Heart left ventricle (tissue), 16 donors: ENCODE measurements at regions of chr9 and their contacts with region 1.

Region 1: GRCh38 chr9:105967798-105968197 is 273.5 kb downstream of the TMEM38B start:
- DNase-seq: no peak
- ATAC-seq: no peak
- H3K4me3 ChIP-seq: no peak overlapping the region
- H3K27ac ChIP-seq: no peak overlapping the region
- H3K4me1 ChIP-seq: peaks cover 0 to 11% (median 6%) of the 10 kb centered on the region in 12 donors
- H3K27me3 ChIP-seq: no peaks in the 10 kb centered on the region
- CTCF ChIP-seq: no peak
- POLR2A ChIP-seq: no peak

Region 2: GRCh38 chr9:105993051-105993854 is 25.5 kb after region 1 on chr9:
- intact Hi-C with region 1: loop called in 1 of 10 experiments (anchors 2 kb)
- DNase-seq: no peak
- ATAC-seq: no peak
- H3K4me3 ChIP-seq: no peak overlapping the region
- H3K27ac ChIP-seq: no peak overlapping the region
- H3K4me1 ChIP-seq: no peaks in the 10 kb centered on the region
- H3K27me3 ChIP-seq: no peaks in the 10 kb centered on the region
- CTCF ChIP-seq: no peak
- POLR2A ChIP-seq: no peak

Region 3: GRCh38 chr9:106019039-106019656 is 51.4 kb after region 1 on chr9:
- intact Hi-C with region 1: no loop called
- DNase-seq: peak in 4 of 5 donors; percentile 11 to 35 (median 28)
- ATAC-seq: peak; percentile 87 to 94 (median 92)
- H3K4me3 ChIP-seq: no peak overlapping the region
- H3K27ac ChIP-seq: no peak overlapping the region
- H3K4me1 ChIP-seq: peaks cover 0 to 14% (median 2%) of the 10 kb centered on the region in 12 donors
- H3K27me3 ChIP-seq: no peaks in the 10 kb centered on the region
- CTCF ChIP-seq: no peak
- POLR2A ChIP-seq: no peak